HEK293T (cell line): ENCODE measurements at regions of chr19 and their contacts with region 1.

Region 1: GRCh38 chr19:45423589-45424190 is at the start of gene ERCC1:
- DNase-seq: peak; percentile 95

Region 2: GRCh38 chr19:45352914-45353796 is 70.5 kb before region 1 on chr19:
- CTCF ChIA-PET with region 1: no interaction called
- POLR2A ChIA-PET with region 1: no interaction called
- DNase-seq: no peak

Region 3: GRCh38 chr19:45385392-45386221 is 38.1 kb before region 1 on chr19:
- CTCF ChIA-PET with region 1: no interaction called
- POLR2A ChIA-PET with region 1: no interaction called
- DNase-seq: no peak

Region 4: DNA sequence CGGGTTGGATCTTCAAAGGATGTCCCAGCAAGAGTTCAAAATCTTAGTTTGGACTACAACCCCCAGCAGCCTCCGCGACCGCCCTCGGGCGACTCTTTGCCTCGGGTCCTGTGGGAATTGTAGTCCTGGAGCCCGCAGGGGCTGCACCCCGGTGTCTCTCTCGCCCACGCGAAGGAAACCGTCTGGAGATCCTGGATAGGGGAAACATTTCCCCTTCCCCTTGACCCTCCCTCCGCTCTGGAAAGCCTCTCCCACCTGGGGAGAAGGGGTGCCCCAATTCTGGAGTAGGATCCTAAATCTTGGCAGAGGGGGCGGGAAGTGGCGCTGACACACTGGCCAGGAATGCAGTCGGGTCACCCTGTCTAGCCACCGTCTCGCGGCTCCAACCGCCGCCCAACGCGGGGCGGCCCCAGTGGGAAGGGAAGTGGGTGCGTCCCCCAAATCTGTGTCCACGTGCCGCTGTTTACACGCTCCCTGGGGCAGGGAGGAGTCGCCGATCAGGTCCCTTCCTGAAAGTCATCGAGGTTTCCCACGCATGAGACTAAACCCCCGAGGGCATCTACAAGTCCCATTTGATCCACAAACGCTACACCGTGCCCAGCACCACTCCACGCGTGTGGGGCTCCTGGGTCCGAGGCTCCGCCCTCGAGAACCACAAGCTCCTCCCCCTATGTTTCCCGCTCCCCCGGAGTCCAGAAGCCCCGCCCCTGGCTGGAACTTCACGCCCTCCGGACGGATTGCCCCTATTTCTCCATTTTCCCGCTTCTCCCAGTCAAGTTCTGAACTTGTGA is 18.1 kb before region 1 on chr19:
- CTCF ChIA-PET with region 1: interaction called, 3 read pairs
- POLR2A ChIA-PET with region 1: interaction called, 14 read pairs
- DNase-seq: peak; percentile 87

Region 5: GRCh38 chr19:45446941-45447340 is 23.3 kb after region 1 on chr19:
- CTCF ChIA-PET with region 1: no interaction called
- POLR2A ChIA-PET with region 1: no interaction called
- DNase-seq: no peak

Region 6: GRCh38 chr19:45460807-45461363 is 37.2 kb after region 1 on chr19:
- CTCF ChIA-PET with region 1: no interaction called
- POLR2A ChIA-PET with region 1: no interaction called
- DNase-seq: no peak

Region 7: DNA sequence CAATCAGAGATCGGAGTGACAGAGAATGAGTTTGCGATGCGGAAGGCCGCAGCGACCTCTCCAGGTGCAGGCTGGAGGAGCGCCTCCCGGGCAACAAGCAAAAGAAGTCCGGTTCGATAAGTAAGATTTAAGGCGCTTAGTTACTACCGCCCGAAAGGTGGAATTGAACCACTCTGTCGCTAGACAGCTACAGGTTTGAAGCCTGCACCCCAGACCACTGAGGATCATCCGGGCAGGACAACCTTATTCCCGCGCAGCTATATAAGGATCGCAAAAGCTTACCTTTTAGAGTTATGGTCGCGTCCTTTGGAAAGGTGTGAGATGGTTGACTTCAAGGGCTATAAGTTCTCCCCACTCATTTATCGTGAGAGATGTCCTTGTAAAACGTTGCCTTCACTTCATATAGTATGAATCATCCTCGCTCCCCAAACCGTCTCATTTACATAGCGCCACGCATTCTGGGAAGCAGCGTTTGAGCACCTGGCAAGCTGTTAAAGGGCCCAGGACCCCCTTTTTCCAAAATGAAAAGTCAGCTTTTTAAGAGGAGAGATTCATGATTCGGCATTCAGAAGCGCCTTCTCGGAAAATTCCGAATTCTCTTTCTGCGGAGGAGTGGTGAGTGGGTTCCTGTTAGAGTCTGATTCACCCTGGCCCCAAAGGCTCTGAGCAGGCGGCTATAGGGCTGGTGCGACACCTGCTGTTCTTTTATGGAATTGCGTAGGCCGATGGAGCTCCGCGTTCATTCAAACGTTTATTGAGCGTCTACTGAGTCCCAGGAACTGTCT is 55.0 kb after region 1 on chr19:
- CTCF ChIA-PET with region 1: interaction called, 12 read pairs
- POLR2A ChIA-PET with region 1: interaction called, 6 read pairs
- DNase-seq: peak; percentile 76